ENCODE measurements at regions of chr6 and their contacts with region 1.

Region 1: GRCh38 chr6:88599561-88599960 is 363.9 kb downstream of the RNGTT start:
- DNase-seq: peak; percentile 42 to 56 (median 48)
- ATAC-seq: peak; percentile 97
- H3K4me3 ChIP-seq: no peak overlapping the region
- H3K27ac ChIP-seq: no peak overlapping the region
- H3K4me1 ChIP-seq: no peaks in the 10 kb centered on the region
- H3K27me3 ChIP-seq: peaks cover 19 to 41% of the 10 kb centered on the region in 2 experiments; a peak in 4 of 5 replicates
- CTCF ChIP-seq: peak; percentile 51 to 79 (median 55)
- EP300 ChIP-seq: no peak
- POLR2A ChIP-seq: no peak
- RAD21 ChIP-seq: peak in 1 of 2 experiments; percentile 60; a peak in 2 of 4 replicates

Region 2: DNA sequence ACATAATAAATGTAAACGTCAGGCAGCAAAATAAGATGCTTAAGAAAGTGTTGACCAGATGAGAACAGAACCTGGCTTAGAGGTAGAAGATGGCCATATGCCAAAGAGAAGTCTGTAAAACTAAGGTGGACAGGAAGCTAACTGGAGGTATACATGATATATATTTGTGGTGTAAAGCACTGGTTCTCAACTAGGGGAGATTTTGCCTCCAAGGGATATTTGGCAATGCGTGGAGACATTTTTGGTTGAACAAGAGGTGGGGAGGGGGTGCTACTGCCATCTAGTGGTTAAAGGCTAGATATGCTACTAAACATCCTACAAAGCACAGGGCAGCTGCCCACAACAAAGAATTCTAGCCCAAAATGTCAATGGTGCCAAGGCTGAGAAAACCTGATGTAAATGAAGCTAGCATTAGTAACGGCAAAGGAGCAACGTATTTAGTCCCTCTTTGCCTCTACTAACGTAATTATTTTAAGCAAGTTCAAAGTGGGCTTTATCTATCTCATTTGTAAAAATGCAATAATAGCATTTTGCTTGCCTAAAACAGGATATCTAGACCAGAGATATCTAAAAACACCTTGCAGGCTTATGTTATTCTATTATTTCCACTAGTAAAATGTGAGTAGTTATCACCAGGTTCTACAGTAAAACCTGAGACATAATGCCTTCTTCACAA is 181.3 kb after region 1 on chr6:
- CTCF ChIA-PET with region 1: no interaction called
- POLR2A ChIA-PET with region 1: interaction called, 3 read pairs
- in situ Hi-C with region 1: no loop called
- intact Hi-C with region 1: loop called (anchors 1 kb)
- DNase-seq: peak; percentile 41 to 70 (median 48)
- ATAC-seq: peak; percentile 85
- H3K4me3 ChIP-seq: no peak overlapping the region
- H3K27ac ChIP-seq: no peak overlapping the region
- H3K4me1 ChIP-seq: no peaks in the 10 kb centered on the region
- H3K27me3 ChIP-seq: no peaks in the 10 kb centered on the region
- CTCF ChIP-seq: peak; percentile 68 to 77 (median 74)
- EP300 ChIP-seq: no peak
- POLR2A ChIP-seq: no peak
- RAD21 ChIP-seq: peak; percentile 58 to 70

Region 3: DNA sequence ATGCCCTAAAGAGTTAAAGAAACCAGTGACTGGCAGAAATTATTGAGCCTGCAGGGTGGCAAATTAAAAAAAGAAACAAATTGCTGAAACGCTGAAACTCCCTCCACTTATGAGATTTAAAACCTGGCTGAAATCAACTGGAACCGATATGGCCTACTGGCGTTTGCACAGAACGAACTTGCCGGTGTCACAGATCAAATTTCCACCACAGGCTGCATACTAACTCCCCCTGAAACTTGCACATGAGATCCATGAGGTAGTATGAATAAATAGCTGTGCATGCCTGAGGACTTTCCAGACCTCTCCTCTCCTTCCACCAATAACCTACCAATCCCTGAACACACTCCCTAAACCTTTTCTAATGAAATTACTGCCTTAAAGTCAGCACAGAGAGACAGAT is 213.5 kb after region 1 on chr6:
- CTCF ChIA-PET with region 1: no interaction called
- POLR2A ChIA-PET with region 1: no interaction called
- in situ Hi-C with region 1: no loop called
- intact Hi-C with region 1: no loop called
- DNase-seq: no peak
- ATAC-seq: no peak
- H3K4me3 ChIP-seq: no peak overlapping the region
- H3K27ac ChIP-seq: no peak overlapping the region
- H3K4me1 ChIP-seq: peaks cover 0 to 5% of the 10 kb centered on the region in 2 experiments; a peak in 1 of 5 replicates
- H3K27me3 ChIP-seq: no peaks in the 10 kb centered on the region
- CTCF ChIP-seq: no peak
- EP300 ChIP-seq: no peak
- POLR2A ChIP-seq: no peak
- RAD21 ChIP-seq: no peak

Region 4: DNA sequence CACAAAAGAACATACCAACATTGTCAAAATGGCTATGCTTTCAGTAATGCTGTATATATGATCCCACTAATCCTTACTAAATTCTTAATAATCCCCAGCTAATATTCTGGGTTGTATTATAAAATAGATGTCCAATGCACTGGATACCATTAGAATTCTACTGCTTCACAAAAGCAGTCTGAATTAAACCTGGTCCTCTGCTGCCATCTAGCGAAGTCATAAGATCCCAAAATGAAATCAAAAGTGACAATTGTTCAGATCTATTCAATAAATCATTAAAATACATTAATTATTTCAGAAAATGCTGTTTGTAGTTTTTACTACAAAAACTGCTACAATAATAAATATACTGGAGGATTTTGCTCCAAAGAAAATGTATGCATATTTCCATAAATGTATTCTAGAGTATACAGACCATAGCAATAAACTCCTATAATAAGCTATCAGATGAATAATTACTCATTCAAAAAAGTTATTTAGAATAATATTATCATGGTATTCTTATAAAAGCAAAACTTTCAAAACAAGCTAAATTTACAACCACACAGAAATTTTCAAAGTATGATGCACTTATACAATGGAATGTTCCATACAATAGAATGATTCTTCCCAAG is 271.3 kb after region 1 on chr6:
- CTCF ChIA-PET with region 1: interaction called, 4 read pairs
- POLR2A ChIA-PET with region 1: no interaction called
- in situ Hi-C with region 1: no loop called
- intact Hi-C with region 1: loop called (anchors 5 kb)
- DNase-seq: peak; percentile 29 to 75 (median 33)
- ATAC-seq: peak; percentile 66; the same call in 2 of the 3 replicates
- H3K4me3 ChIP-seq: no peak overlapping the region
- H3K27ac ChIP-seq: no peak overlapping the region
- H3K4me1 ChIP-seq: peaks cover 0 to 9% of the 10 kb centered on the region in 2 experiments; a peak in 2 of 5 replicates
- H3K27me3 ChIP-seq: no peaks in the 10 kb centered on the region
- CTCF ChIP-seq: peak; percentile 17 to 71 (median 43); a peak in 4 of 6 replicates
- EP300 ChIP-seq: no peak
- POLR2A ChIP-seq: no peak
- RAD21 ChIP-seq: peak; percentile 72 to 75

Region 5: GRCh38 chr6:89281779-89282246 is 682.3 kb after region 1 on chr6:
- CTCF ChIA-PET with region 1: no interaction called
- POLR2A ChIA-PET with region 1: no interaction called
- in situ Hi-C with region 1: no loop called
- intact Hi-C with region 1: no loop called
- DNase-seq: peak; percentile 75 to 79 (median 77)
- ATAC-seq: peak; percentile 99
- H3K4me3 ChIP-seq: no peak overlapping the region
- H3K27ac ChIP-seq: no peak overlapping the region
- H3K4me1 ChIP-seq: no peaks in the 10 kb centered on the region
- H3K27me3 ChIP-seq: peaks cover 45 to 54% of the 10 kb centered on the region in 2 experiments
- CTCF ChIP-seq: peak; percentile 68 to 83 (median 70)
- EP300 ChIP-seq: no peak
- POLR2A ChIP-seq: no peak
- RAD21 ChIP-seq: peak; percentile 30 to 63; a peak in 3 of 4 replicates

Measured in K562 (cell line).